ENCODE measurements at regions of chr3 and their contacts with region 1.

Region 1: GRCh38 chr3:7546253-7546652 is 685.3 kb downstream of the GRM7 start:
- DNase-seq: peak; percentile 24
- H3K4me3 ChIP-seq: no peak overlapping the region
- H3K27ac ChIP-seq: no peak overlapping the region
- H3K4me1 ChIP-seq: no peaks in the 10 kb centered on the region
- H3K27me3 ChIP-seq: no peaks in the 10 kb centered on the region
- CTCF ChIP-seq: peak in 1 of 2 donors; percentile 34

Region 2: DNA sequence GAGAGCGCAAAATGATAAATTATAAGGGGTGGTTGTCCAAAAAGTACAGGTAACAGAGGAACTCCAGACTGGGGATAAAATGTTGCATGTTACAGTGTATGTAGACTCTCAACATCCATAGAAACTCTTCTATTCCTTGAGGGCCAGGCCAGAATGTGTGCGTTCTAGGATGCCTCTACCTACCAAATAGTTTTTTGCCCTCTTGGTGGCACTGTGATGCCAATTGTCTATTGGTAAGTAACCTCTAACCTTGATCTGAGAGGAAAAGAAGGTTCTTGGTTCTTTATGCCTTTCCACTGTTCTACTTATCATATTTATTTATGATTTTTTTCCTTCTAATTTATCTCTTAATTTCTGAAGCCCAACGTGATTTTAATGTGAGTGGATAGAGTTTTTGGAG is 260.7 kb before region 1 on chr3:
- CTCF ChIA-PET with region 1: no interaction called
- dilution Hi-C with region 1: no loop called
- in situ Hi-C with region 1: no loop called
- intact Hi-C with region 1: loop called (anchors 1 kb)
- DNase-seq: peak; percentile 9
- H3K4me3 ChIP-seq: no peak overlapping the region
- H3K27ac ChIP-seq: no peak overlapping the region
- H3K4me1 ChIP-seq: no peaks in the 10 kb centered on the region
- H3K27me3 ChIP-seq: no peaks in the 10 kb centered on the region
- CTCF ChIP-seq: peak; percentile 20 to 38

Region 3: DNA sequence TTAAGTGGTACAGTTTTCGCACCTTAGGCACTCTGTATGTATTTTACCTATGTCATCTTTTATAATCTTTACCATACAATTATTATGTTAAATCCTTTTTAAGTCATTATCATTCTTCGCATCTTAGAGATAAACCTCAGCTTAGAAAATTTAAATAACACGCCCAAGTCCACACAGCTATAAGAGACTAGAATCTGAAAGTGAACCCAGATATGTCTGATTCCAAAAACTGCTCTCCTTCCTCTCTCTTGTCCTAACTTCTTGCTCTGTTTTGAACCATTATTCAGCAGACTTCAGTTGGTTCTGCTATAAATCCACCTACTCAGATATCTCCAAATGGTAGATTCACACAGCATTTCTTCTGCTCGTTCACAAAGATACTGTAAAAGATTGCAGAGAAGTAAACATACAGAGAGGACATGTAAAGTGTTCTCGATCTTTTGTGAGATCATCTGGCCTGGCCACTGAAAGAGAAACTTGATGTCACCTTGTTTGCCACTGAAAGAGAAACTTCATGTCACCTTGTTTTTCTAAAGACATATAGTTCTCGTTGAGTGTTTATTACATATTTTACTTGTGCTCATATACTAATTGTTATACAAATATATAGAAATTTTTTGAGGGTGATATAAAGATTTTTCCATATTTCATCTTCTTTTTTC is 152.2 kb before region 1 on chr3:
- CTCF ChIA-PET with region 1: no interaction called
- dilution Hi-C with region 1: no loop called
- in situ Hi-C with region 1: no loop called
- intact Hi-C with region 1: loop called (anchors 1 kb)
- DNase-seq: no peak
- H3K4me3 ChIP-seq: no peak overlapping the region
- H3K27ac ChIP-seq: no peak overlapping the region
- H3K4me1 ChIP-seq: no peaks in the 10 kb centered on the region
- H3K27me3 ChIP-seq: no peaks in the 10 kb centered on the region
- CTCF ChIP-seq: no peak

Measured in mammary epithelial cell (primary cell).